Activated naive CD4-positive, alpha-beta T cell treated with anti-CD3 and anti-CD28 coated beads for 36 hours (primary cell): ENCODE measurements at regions of chr14 and their contacts with region 1.

Region 1: DNA sequence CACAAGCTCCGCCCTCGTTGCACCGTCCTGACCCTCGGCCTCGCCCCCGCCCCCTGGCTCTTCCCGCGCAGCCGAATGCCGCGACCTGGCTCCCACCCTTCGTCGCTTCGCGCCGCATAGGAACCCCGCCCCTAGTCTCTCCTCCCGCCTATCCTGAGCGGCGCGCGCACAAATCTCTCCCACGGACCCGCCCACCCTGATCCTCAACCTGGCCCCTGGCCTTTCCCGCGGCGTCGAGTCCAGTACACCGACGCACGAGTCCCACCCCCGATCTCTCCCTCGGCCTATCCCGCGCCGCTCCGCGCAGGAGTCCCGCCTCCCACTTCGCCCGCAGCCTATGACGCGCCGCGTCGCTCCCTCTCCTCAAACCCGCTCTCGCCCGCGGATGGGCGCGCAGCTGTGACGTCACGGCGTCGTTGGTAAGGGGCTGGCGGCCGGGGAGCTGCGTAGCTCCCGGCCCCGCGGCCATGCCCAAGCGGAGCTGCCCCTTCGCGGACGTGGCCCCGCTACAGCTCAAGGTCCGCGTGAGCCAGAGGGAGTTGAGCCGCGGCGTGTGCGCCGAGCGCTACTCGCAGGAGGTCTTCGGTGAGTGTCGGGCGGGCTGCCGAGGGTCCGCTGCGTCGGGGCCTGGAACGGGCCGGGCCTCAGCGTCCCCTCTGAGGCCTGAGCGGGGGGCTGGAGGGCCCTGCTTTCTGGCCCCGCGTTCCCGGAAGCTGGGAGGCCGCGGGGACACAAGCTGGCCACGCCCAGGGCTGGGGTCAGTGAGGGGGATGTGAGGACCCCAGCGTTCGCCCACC is at the start of gene SIVA1:
- DNase-seq: peak; percentile 100
- H3K4me3 Mint-ChIP-seq: peak within 1 kb of the TSS; percentile 91
- H3K27ac Mint-ChIP-seq: peak within 1 kb of the TSS; percentile 88
- H3K4me1 Mint-ChIP-seq: peaks cover 32% of the 10 kb centered on the region
- H3K27me3 Mint-ChIP-seq: no peaks in the 10 kb centered on the region
- total RNA-seq, gene SIVA1: 86.1 to 92.7 TPM

Region 2: DNA sequence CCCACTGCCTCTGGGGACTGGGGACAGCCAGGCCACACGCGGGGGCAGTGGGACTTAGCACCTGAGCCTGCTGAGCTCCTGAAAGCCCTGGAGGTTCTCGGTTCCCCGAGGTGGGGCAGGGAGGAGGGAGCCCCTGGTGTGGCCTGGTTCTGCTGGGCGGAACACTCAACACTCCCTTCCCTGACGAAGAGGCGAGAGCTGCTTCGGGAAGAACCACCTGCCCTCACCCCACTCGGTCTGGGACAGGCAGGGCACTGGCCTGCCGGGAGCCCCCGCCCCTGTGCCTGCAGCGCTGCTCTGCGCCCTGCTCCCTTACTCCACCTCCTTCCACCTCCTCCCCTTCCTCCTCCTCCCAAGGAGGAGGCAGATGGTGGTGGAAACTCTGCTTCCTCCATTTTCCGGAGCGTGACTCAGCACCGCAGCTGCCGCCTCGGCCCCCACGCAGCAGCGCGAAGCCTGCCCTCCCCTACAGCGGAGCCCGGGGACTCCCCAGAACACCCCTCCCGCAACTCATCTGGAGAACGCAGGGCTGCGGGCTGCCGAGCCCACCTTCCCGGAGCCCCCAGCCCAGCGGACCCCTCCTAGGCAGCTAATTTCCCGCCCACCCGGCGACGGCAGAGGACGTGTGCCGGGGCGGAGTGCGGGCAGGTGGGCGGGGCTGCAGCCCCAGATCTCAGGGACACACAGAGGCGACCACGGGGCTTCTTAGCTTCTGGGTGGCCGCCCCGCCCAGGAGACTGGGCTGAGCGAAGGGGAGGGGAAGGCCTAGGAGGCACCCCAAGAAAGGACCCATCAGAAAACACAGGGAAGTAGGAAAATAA is 75.2 kb before region 1 on chr14:
- CTCF ChIA-PET with region 1: no interaction called
- intact Hi-C with region 1: loop called (anchors 2 kb)
- DNase-seq: peak; percentile 83
- H3K4me3 Mint-ChIP-seq: peak overlapping the region; percentile 67
- H3K27ac Mint-ChIP-seq: peak overlapping the region; percentile 61
- H3K4me1 Mint-ChIP-seq: peaks cover 18% of the 10 kb centered on the region
- H3K27me3 Mint-ChIP-seq: no peaks in the 10 kb centered on the region

Region 3: DNA sequence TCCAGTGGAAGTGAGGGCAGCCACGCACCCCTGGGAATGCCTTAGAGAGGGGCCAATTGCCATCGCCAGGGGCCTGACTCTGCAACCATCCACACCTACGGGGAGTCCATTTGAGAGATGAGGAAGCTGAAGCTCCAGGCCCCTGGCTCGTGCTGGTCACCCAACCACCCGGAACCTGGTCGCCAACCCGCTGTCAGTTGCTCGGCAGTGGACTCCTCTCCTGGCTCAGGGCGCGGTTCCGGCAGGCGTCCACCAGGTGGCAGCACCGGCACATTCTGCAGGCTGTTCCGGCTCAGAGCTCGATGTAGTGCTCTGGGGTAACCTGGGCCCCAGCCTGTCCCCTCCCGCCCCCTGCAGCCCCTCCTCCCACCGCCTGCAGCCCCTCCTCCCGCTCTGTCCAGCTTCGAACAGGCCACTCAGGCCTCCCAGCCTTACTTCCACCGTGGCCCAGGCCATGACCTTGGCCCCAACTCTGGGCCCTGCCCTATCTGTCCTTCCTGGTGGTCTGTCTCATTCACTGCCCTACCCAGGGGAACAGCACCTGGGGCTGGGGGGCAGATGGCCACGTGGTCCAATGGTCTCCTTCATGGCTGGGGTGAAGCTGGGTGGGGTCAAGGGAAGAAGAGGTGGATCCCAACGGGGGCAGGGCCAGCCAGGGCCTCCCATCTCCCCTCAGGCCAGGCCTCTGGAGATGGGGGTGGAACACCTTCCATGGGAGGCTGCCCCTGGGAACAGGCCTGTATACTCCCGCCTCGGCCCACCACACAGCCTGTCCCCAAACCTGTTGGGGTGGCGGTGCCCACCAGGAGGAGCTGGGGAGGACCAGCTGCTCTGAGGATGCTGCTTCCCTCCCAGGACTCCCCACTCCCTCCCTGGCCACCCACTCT is 15.7 kb after region 1 on chr14:
- CTCF ChIA-PET with region 1: interaction called, 7 read pairs
- intact Hi-C with region 1: loop called (anchors 1 kb)
- DNase-seq: peak; percentile 95
- H3K4me3 Mint-ChIP-seq: no peak overlapping the region
- H3K27ac Mint-ChIP-seq: peak overlapping the region; percentile 41
- H3K4me1 Mint-ChIP-seq: peaks cover 7% of the 10 kb centered on the region
- H3K27me3 Mint-ChIP-seq: no peaks in the 10 kb centered on the region

Region 4: GRCh38 chr14:104800015-104800770 is 47.3 kb after region 1 on chr14:
- CTCF ChIA-PET with region 1: no interaction called
- intact Hi-C with region 1: loop called (anchors 2 kb)
- DNase-seq: peak; percentile 77
- H3K4me3 Mint-ChIP-seq: peak overlapping the region; percentile 3
- H3K27ac Mint-ChIP-seq: no peak overlapping the region
- H3K4me1 Mint-ChIP-seq: peaks cover 24% of the 10 kb centered on the region
- H3K27me3 Mint-ChIP-seq: no peaks in the 10 kb centered on the region

Region 5: DNA sequence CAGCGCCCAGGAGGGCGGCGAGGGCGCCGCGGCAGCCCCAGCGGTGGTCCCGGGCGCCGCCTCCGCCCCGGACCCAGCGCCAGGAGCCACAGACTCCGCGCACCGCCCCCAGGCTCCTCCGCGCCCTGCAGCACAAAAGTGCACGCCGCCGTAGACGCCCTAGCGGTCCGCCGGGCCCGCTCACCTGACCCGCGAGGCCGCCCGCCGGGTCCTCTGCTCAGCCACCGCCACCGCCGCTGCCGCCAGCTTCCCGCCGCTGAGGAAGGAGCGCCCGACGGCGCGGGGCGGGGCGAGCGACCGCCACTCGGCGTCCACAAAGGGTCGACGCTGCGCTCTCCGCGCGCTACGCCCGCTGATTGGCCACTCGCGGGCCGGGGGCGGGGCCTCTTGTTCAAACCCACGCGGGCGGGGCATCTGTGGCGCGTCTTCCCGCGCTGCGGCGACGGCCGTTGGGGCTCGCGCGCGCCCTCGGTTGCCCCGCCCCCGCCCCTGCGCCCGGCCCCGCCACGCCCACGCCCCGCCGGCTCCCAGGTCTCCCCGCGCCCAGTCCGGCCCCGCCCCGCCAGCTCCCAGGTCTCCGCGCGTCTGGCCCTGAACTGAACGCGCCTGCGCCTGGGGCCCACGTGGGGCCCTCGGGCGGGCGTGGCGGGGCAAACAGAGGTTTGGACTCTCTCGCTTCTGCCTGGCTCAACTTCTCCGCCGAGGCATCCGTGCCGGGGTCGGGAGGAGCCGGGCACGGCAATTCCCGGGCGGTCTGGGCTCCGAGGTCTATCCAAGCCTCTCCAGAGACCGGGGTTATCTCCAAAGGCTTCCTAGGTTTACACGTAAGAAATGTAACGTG is 268.1 kb after region 1 on chr14 and contains the start of gene CDCA4:
- CTCF ChIA-PET with region 1: no interaction called
- intact Hi-C with region 1: loop called (anchors 1 kb)
- DNase-seq: peak; percentile 98
- H3K4me3 Mint-ChIP-seq: peak within 1 kb of the TSS; percentile 98
- H3K27ac Mint-ChIP-seq: peak within 1 kb of the TSS; percentile 87
- H3K4me1 Mint-ChIP-seq: peaks cover 71% of the 10 kb centered on the region
- H3K27me3 Mint-ChIP-seq: no peaks in the 10 kb centered on the region
- total RNA-seq, gene CDCA4: 59.6 to 60.4 TPM